Ovary (tissue), 10 donors: ENCODE measurements at regions of chr18 and their contacts with region 1.

Region 1: DNA sequence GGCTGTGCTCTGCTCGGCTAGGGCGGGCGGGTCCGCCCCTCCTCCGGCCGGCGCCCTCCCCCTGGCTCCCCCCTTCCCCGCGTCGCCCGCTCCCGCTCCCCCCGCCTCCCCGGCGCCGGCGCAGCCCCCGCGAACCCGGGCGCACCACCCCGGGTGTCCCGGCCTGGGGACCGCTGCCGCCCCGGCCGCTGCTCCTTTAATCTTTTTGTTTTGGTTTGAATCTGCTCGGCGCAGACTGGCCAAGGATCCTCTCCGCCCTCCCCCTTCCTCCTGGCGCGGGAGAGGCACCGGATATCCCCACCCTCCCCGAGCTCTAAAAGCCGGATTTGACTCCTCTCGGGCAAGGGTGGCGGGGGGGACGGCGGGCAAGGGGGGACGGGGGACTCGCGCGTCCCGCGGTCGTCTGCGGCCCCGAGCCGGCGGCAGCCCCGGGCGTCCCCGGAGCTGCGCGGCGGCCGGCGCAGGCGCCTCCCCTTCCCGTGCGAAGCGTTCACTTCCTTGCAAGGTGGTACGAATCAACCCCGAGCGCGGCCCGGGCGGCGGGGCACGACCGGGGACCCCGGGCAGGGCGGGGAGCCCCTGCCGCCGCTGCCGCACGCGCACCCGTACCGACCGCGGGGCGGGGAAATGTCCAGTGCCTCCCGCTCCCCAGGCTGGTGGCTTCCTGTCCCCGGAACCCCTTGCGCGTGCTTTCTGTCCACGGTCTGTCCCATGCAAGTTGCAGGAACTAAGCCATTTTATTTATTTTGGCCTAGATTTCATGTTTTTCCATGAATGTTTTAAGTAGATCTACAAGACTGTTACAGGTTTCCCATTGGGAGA is at the start of gene PTGR3:
- DNase-seq: peak; percentile 86 to 89 (median 87)
- H3K4me3 ChIP-seq: peak within 1 kb of the TSS; percentile 97
- H3K27ac ChIP-seq: peak within 1 kb of the TSS; percentile 87 to 99
- H3K4me1 ChIP-seq: peaks cover 4% of the 10 kb centered on the region
- H3K27me3 ChIP-seq: no peaks in the 10 kb centered on the region
- CTCF ChIP-seq: no peak
- EP300 ChIP-seq: no peak
- POLR2A ChIP-seq: peak; percentile 27
- total RNA-seq, gene PTGR3: 15.4 to 55.7 (median 32.6) TPM

Region 2: DNA sequence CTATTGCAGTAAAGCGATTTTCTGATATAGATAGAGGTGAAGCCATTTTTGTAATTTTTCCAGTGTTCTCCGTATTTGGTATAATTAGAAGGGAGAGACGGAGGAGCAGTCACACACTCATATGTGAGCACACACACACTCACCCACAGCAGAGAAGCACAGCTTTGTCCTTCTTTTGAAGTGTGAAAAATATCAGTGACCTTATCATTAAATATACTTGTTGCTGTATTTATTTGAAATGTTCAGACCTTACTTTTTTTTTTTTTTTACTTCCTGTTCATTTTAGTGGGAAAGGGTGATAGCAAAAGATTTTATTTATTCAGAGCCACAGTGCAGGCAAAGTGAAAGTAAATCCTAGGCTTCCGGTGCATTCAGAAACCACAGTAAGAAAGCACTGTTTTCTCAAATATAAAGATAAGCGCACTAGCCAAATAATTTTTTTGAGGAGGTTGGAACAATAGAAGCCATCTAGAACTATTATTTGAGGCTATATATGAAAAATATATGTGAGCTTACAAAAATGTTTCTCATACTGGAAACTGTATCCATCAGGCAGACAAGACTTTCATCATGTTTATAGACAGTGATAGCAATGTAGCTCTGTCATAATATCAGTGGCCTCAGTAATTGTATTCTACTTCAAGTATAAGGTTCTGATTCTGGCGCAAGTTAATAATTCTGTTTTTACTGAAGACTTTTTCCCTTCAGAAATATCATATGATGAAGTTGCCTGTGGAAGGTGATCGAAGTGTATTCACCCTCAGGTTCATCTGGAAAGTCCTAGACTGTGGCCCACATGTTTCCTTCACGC is 38.5 kb after region 1 on chr18:
- intact Hi-C with region 1: loop called in 3 of 4 experiments (anchors 5 kb)
- DNase-seq: no peak
- H3K4me3 ChIP-seq: peak overlapping the region; percentile 39
- H3K27ac ChIP-seq: peak overlapping the region; percentile 81 to 84
- H3K4me1 ChIP-seq: peaks cover 35% of the 10 kb centered on the region
- H3K27me3 ChIP-seq: no peaks in the 10 kb centered on the region
- CTCF ChIP-seq: no peak
- EP300 ChIP-seq: no peak
- POLR2A ChIP-seq: no peak